SK-N-SH (cell line): ENCODE measurements at regions of chr14 and their contacts with region 1.

Region 1: DNA sequence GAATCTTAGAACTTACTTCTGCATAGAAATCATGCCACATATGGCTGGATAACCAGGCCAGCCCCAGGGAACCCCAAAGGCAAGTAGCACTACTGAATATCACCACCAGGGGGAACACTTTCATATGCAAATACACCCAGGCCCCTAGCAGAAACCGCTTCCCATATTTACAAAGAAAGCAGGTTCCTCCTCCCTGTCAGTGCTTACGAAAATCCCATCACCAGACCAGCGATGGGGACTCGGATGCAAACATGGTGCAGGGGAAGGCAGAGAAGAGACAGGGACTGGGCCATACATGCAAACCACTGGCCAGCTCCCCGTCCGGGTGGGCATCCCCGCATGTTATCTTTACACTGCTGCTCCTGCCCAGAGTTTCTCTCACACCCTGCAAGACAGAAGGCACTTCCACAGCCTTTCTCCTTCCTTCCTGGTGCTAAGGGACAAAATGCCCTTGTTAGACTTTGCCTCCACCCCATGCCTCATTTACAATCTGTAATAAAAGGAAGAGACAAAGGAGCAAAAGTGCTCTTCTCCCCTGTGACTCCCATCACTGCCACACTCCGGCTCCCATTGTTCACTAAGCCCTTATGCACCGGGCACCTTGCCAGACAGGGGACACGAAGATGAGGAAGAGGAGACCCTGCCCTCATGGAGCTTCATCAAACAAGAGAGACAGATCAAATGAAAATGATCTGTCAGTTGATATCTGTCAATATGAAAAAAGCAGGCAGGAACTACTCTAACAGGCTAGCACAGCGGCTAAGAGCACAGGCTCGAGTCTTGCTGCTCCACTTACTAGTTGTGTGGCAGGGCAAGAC is 62.3 kb downstream of the PTPN21 start:
- DNase-seq: peak; percentile 81
- H3K4me3 ChIP-seq: no peak overlapping the region; a peak in 1 of 4 replicates
- H3K27ac ChIP-seq: no peak overlapping the region
- H3K4me1 ChIP-seq: peaks cover 0 to 3% of the 10 kb centered on the region in 2 experiments; a peak in 1 of 4 replicates
- H3K27me3 ChIP-seq: no peaks in the 10 kb centered on the region
- CTCF ChIP-seq: peak; percentile 88
- EP300 ChIP-seq: no peak
- RAD21 ChIP-seq: peak; percentile 80

Region 2: DNA sequence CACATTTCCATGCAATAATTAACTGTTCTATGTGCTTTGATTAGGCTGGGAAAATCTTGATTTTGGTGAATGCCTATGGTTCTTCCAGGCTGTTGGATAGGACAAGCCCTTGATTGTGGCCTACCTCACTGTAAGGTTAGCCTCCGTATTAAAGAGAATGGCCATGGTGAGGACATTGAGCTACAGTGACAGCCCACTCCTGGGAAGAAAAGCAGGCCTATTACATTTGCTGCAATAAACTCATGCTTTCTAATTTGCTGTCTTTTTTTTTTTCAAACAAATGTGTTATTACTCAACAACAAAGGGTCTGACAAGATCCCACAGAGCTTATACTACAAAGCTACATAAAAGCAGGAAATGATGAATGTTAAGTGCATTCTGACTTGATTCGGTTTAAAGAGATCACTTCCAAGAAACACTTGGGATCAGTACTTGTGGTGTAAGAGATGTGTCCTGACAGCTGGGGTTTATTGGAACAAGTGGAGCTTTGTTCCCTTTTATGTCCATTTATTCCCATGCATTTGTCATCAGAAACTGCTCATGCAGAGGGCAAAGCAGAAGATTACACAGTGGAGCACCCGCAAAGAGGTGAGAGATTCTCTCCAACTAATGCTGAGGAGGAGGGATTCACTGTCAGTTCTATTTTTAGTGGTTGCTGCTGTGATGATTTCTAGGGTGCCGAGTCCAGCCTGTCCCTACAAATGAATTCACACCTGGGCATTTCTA is 140.4 kb before region 1 on chr14:
- CTCF ChIA-PET with region 1: no interaction called
- POLR2A ChIA-PET with region 1: no interaction called
- DNase-seq: no peak
- H3K4me3 ChIP-seq: no peak overlapping the region
- H3K27ac ChIP-seq: no peak overlapping the region
- H3K4me1 ChIP-seq: no peaks in the 10 kb centered on the region
- H3K27me3 ChIP-seq: no peaks in the 10 kb centered on the region
- CTCF ChIP-seq: no peak
- EP300 ChIP-seq: no peak
- RAD21 ChIP-seq: no peak

Region 3: DNA sequence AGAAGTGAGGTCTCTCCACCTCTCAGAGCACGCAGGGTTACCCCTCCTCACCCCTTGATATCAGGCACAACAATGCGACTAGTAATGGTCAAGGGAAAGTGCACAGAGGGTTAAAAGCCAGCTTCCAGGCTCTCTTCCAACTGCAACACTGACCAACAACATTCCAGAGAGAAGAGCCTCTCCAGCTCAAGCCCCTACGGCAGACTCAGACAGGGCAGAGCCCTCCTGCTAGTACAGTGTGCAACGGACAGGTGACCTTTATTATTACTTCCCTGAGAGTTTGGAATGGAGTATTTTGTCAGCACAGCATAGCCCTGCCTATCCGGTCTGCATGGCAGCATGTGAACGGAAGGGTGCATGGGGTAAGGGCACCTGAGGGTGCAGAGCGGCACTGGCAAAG is 10.7 kb before region 1 on chr14:
- CTCF ChIA-PET with region 1: interaction called, 19 read pairs
- POLR2A ChIA-PET with region 1: no interaction called
- DNase-seq: no peak
- H3K4me3 ChIP-seq: no peak overlapping the region
- H3K27ac ChIP-seq: no peak overlapping the region
- H3K4me1 ChIP-seq: peaks cover 0 to 3% of the 10 kb centered on the region in 2 experiments; a peak in 1 of 4 replicates
- H3K27me3 ChIP-seq: no peaks in the 10 kb centered on the region
- CTCF ChIP-seq: no peak
- EP300 ChIP-seq: no peak
- RAD21 ChIP-seq: no peak

Region 4: DNA sequence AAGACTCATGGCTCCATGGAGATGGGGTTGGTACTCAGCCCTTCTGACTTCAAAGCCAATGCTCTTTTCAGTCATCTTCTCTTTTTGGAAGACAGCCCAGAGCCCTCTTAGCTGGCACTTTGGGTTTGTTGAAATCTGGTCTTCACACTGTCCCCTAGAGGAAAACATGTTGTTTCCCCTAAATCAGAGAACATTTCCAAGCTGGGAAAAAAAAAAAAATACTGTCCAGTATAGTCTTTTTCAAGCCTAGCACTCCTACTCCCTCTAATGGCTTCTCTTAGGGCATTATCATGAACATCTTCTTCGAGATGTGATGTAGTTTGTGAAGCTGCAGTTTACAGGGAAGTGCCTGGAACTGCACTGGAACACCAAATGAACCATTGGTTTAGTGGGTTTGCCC is 67.4 kb after region 1 on chr14:
- CTCF ChIA-PET with region 1: interaction called, 15 read pairs
- POLR2A ChIA-PET with region 1: no interaction called
- DNase-seq: peak; percentile 41
- H3K4me3 ChIP-seq: no peak overlapping the region
- H3K27ac ChIP-seq: peak overlapping the region in 1 of 2 experiments; percentile 30; a peak in 1 of 4 replicates
- H3K4me1 ChIP-seq: peaks cover 0 to 15% of the 10 kb centered on the region in 2 experiments; a peak in 3 of 4 replicates
- H3K27me3 ChIP-seq: no peaks in the 10 kb centered on the region
- CTCF ChIP-seq: peak; percentile 67
- EP300 ChIP-seq: no peak
- RAD21 ChIP-seq: peak; percentile 71